ENCODE measurements at regions of chr4 and their contacts with region 1.

Region 1: DNA sequence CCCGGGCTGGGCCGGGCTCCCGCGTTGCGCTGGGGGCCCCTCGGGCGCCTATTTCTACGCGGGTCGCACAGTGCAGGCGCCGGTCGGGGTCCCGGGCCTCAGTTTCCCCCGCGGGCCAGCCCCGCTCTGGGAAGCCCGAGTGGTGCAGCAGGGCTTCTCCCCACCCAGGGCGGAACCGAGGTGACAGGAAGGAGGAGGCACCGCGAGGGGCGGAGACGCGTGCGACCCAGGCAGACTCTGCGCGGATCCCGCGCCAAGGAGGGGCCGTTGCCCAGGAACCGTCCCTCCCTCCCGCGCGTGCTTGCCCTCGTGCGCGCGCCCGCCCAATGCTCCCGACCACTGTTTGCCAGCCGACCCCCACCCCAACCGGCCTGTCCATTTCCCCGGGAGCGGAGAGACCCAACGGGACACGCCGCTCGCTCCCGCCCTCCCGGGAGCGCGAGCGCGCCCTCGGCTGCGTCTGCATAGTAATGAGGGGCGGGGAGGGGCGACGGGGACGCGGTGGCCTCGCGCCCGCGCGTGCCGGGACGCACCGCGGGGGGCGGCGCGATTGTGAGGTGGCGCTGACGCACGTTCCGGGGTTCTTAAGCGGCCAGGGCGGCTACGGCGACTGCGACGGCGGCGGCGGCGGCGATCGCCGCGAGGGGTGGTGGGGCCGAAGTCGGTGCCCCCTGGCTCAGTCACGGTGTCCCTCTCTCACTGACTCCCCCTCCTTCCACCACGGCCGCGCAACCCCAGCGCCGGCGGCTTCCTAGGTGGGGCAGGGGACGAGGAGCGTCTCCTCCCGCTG is at the start of gene CPEB2:
- H3K4me3 Mint-ChIP-seq: peak within 1 kb of the TSS; percentile 80
- H3K27ac Mint-ChIP-seq: peak within 1 kb of the TSS; percentile 98
- H3K4me1 Mint-ChIP-seq: no peaks in the 10 kb centered on the region
- H3K27me3 Mint-ChIP-seq: no peaks in the 10 kb centered on the region

Region 2: DNA sequence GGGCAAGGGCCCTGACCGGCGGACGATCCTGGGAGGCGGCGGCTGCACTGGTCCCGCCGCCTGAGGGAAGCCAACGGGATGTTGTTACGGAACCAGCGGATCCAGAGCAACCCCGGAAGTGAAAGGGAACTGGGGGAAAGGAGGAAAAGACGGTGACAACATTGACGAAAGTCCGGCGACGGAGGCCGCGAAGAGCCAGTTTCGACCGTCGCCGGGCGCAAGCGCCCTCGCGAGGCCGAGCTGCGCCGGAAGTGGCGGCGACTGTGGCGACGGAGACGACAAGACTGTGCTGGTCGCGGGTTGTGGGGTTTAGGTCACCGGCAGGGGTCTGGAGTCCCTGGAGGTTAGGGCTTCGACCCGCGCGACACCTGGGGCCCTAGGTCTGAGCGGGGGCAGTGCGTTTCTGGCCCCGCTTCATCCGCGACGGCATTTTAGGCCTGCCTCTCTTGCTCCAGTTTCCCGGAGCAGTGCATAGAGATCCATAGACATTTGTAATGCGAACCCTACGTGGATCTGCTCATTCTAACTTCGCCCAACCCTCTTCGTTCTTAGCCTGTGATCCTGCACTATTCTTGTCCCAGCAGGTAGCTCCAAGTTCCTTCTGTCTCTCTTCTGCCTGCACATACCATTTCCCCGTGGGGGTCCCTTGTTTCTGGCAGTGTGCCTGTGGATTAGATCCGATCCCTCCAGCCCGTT is 1374.3 kb before region 1 on chr4 and contains the start of gene BOD1L1:
- intact Hi-C with region 1: loop called (anchors 5 kb)
- H3K4me3 Mint-ChIP-seq: peak within 1 kb of the TSS; percentile 92
- H3K27ac Mint-ChIP-seq: peak within 1 kb of the TSS; percentile 98
- H3K4me1 Mint-ChIP-seq: peaks cover 36% of the 10 kb centered on the region
- H3K27me3 Mint-ChIP-seq: peaks cover 5% of the 10 kb centered on the region

Region 3: GRCh38 chr4:14125375-14126129 is 876.5 kb before region 1 on chr4:
- intact Hi-C with region 1: loop called (anchors 10 kb)
- H3K4me3 Mint-ChIP-seq: no peak overlapping the region
- H3K27ac Mint-ChIP-seq: peak overlapping the region; percentile 61
- H3K4me1 Mint-ChIP-seq: peaks cover 58% of the 10 kb centered on the region
- H3K27me3 Mint-ChIP-seq: no peaks in the 10 kb centered on the region

Region 4: DNA sequence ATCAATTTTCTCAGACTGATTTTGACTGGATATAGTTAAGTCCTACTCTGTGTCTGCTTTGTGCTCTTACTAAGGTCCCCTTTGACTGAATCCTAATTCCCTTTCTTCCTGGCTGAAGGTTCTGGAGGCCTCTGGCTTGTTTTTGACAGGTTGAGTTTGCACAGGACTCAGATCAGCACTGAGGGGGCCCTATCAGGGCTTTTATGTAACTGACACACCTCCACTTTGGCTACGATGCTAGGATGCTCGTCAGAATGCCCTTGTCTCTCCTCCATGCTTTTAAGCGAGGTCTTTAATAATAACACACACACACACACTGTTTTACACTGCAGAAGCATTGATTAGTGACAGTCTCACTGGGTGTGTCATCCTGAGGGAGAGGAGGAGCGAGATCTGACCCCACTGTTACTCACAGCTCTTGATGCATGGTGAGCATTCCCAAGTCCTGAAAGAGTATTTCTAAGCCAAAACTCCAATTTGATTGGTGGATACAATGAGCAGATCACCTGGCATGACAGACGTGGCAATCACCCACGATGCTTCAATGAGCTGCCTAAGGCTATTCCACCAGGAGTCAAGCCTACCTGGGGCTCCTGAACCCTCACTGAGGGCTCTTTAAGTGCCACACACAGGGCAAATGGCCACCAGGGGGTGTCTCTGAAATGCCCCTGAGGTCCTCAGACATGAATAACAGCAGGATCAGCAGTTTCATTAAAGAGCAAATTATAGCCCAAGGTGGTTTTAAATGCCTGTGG is 130.2 kb before region 1 on chr4:
- intact Hi-C with region 1: loop called (anchors 5 kb)
- H3K4me3 Mint-ChIP-seq: no peak overlapping the region
- H3K27ac Mint-ChIP-seq: no peak overlapping the region
- H3K4me1 Mint-ChIP-seq: peaks cover 14% of the 10 kb centered on the region
- H3K27me3 Mint-ChIP-seq: peaks cover 8% of the 10 kb centered on the region

Region 5: GRCh38 chr4:15020502-15021286 is 18.6 kb after region 1 on chr4:
- intact Hi-C with region 1: no loop called
- H3K4me3 Mint-ChIP-seq: no peak overlapping the region
- H3K27ac Mint-ChIP-seq: no peak overlapping the region
- H3K4me1 Mint-ChIP-seq: peaks cover 37% of the 10 kb centered on the region
- H3K27me3 Mint-ChIP-seq: no peaks in the 10 kb centered on the region

Region 6: DNA sequence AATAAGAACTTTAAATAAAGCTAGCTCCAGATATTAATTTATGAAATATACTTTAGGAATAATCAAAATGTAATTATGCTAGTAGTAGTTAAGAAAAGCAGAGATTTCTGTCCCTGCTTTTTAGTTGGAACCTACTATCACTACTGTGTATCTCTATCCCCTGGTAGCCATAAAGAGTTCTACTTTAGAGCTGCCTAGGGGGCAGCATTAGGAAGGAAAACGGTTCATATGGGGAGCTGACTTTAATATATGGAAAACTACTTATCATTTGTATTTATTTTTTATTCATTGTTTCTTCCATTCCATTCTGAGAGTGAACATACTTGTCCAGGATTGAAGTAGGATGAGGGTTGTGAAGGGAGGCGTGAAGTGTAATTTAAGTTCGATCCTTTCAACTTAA is 41.2 kb after region 1 on chr4:
- intact Hi-C with region 1: loop called (anchors 5 kb)
- H3K4me3 Mint-ChIP-seq: no peak overlapping the region
- H3K27ac Mint-ChIP-seq: no peak overlapping the region
- H3K4me1 Mint-ChIP-seq: peaks cover 7% of the 10 kb centered on the region
- H3K27me3 Mint-ChIP-seq: no peaks in the 10 kb centered on the region

Region 7: GRCh38 chr4:15197005-15197404 is 194.9 kb after region 1 on chr4:
- intact Hi-C with region 1: no loop called
- H3K4me3 Mint-ChIP-seq: no peak overlapping the region
- H3K27ac Mint-ChIP-seq: no peak overlapping the region
- H3K4me1 Mint-ChIP-seq: no peaks in the 10 kb centered on the region
- H3K27me3 Mint-ChIP-seq: no peaks in the 10 kb centered on the region

Measured in dendritic cell treated with granulocyte-macrophage colony-stimulating factor and Interleukin-4, amounts not matched to agents 40 ng/mL and 50 ng/mL, for 4 days (primary cell).